CD8-positive, alpha-beta T cell (primary cell): ENCODE measurements at regions of chr9 and their contacts with region 1.

Region 1: GRCh38 chr9:79694676-79695400 is 123.1 kb downstream of the TLE4 start:
- DNase-seq: no peak
- ATAC-seq: no peak
- H3K4me3 ChIP-seq: no peak overlapping the region
- H3K4me3 Mint-ChIP-seq: no peak overlapping the region
- H3K27ac ChIP-seq: no peak overlapping the region
- H3K27ac Mint-ChIP-seq: no peak overlapping the region
- H3K4me1 ChIP-seq: peaks cover 27% of the 10 kb centered on the region
- H3K4me1 Mint-ChIP-seq: peaks cover 80% of the 10 kb centered on the region
- H3K27me3 ChIP-seq: no peaks in the 10 kb centered on the region
- H3K27me3 Mint-ChIP-seq: no peaks in the 10 kb centered on the region
- CTCF ChIP-seq: no peak

Region 2: DNA sequence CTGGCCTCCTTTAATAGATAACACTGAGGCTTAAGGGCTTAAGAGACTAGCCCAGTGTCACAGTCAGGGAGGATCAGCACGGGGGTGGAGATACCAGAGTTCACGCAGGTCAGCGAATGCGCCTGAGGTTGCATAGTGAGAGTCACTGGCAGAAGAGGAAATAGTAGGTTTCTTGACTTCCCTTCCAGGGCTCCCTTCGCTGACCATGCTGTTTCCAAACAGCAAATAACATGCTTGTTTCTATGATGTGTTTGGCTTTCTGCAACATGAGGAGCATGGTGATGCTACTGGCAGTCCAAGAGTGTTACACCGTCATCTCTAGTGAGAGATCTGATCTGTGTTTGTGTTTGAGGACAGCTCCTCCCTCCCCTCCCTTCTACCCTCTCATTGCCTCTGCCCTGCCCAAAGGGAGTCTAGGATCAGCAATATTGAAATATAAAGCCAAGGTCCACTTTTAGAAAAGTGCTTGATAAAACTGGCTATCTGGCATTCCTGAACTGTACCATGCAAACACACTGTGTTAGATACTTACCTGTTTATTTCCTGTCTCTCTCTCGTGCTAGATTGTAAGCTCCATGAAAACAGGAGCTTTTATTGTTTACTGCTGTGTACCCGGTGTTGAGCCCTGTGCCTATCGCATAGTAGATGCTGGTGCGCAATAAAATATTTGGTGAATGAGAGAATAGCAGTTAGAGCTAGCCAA is 110.7 kb before region 1 on chr9:
- CTCF ChIA-PET with region 1: no interaction called
- POLR2A ChIA-PET with region 1: no interaction called
- intact Hi-C with region 1: loop called in 1 of 2 experiments (anchors 5 kb)
- DNase-seq: peak in 4 of 9 experiments; percentile 20 to 57 (median 30)
- ATAC-seq: peak; percentile 36
- H3K4me3 ChIP-seq: no peak overlapping the region
- H3K4me3 Mint-ChIP-seq: peak overlapping the region; percentile 54
- H3K27ac ChIP-seq: no peak overlapping the region
- H3K27ac Mint-ChIP-seq: peak overlapping the region; percentile 46
- H3K4me1 ChIP-seq: peaks cover 55% of the 10 kb centered on the region
- H3K4me1 Mint-ChIP-seq: peaks cover 82% of the 10 kb centered on the region
- H3K27me3 ChIP-seq: no peaks in the 10 kb centered on the region
- H3K27me3 Mint-ChIP-seq: no peaks in the 10 kb centered on the region
- CTCF ChIP-seq: no peak